Activated naive CD4-positive, alpha-beta T cell treated with anti-CD3 and anti-CD28 coated beads for 36 hours (primary cell): ENCODE measurements at regions of chr10 and their contacts with region 1.

Region 1: GRCh38 chr10:14185316-14186045 is 145.2 kb downstream of the FRMD4A start:
- DNase-seq: peak; percentile 73
- H3K4me3 Mint-ChIP-seq: peak overlapping the region; percentile 61
- H3K27ac Mint-ChIP-seq: peak overlapping the region; percentile 96
- H3K4me1 Mint-ChIP-seq: peaks cover 29% of the 10 kb centered on the region
- H3K27me3 Mint-ChIP-seq: peaks cover 27% of the 10 kb centered on the region

Region 2: GRCh38 chr10:13348216-13349017 is 837.1 kb before region 1 on chr10 and contains the start of gene SEPHS1:
- CTCF ChIA-PET with region 1: no interaction called
- intact Hi-C with region 1: no loop called
- DNase-seq: peak; percentile 91
- H3K4me3 Mint-ChIP-seq: peak within 1 kb of the TSS; percentile 88
- H3K27ac Mint-ChIP-seq: peak within 1 kb of the TSS; percentile 94
- H3K4me1 Mint-ChIP-seq: peaks cover 57% of the 10 kb centered on the region
- H3K27me3 Mint-ChIP-seq: no peaks in the 10 kb centered on the region
- total RNA-seq, gene SEPHS1: 75.6 to 79.6 TPM

Region 3: DNA sequence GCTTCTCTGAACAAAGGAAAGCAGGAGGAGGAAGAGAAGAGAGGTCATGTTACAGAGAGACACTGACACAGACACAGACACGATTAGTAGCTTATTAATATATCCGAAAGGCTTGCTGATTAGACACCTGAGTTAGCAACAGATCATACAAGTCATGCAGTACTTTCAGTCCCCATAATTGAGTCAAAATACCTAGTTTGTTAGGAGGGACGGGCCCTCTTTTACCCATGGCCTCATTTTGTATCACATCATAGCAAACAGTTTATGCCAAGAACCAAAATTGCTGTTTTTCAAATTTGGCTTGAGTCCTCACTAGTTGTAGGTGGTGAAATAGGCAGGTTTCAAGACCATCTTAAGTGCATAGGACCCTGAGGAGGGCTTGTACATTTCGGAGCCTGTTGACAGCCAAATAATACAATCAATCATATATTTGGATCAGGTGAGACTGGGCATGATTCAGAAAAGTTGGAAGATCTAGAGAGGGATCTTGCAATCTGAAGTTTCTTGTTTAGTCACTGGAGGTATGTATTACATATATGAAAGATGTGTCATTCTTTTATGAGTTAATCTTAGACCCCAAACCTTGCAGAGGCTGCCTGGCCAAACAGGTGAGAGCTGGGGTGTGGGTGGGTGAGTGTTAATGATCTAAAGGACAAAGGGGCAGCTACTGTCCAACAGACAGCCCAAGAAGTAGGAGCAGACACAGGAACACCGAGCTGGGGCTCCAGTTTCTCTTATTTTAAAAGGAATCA is 533.3 kb before region 1 on chr10:
- CTCF ChIA-PET with region 1: no interaction called
- intact Hi-C with region 1: loop called (anchors 2 kb)
- DNase-seq: peak; percentile 33
- H3K4me3 Mint-ChIP-seq: no peak overlapping the region
- H3K27ac Mint-ChIP-seq: peak overlapping the region; percentile 19
- H3K4me1 Mint-ChIP-seq: peaks cover 19% of the 10 kb centered on the region
- H3K27me3 Mint-ChIP-seq: no peaks in the 10 kb centered on the region

Region 4: GRCh38 chr10:14039968-14040671 is 145.4 kb before region 1 on chr10:
- CTCF ChIA-PET with region 1: interaction called, 3 read pairs
- intact Hi-C with region 1: loop called (anchors 1 kb)
- DNase-seq: no peak
- H3K4me3 Mint-ChIP-seq: no peak overlapping the region
- H3K27ac Mint-ChIP-seq: no peak overlapping the region
- H3K4me1 Mint-ChIP-seq: peaks cover 9% of the 10 kb centered on the region
- H3K27me3 Mint-ChIP-seq: no peaks in the 10 kb centered on the region

Region 5: DNA sequence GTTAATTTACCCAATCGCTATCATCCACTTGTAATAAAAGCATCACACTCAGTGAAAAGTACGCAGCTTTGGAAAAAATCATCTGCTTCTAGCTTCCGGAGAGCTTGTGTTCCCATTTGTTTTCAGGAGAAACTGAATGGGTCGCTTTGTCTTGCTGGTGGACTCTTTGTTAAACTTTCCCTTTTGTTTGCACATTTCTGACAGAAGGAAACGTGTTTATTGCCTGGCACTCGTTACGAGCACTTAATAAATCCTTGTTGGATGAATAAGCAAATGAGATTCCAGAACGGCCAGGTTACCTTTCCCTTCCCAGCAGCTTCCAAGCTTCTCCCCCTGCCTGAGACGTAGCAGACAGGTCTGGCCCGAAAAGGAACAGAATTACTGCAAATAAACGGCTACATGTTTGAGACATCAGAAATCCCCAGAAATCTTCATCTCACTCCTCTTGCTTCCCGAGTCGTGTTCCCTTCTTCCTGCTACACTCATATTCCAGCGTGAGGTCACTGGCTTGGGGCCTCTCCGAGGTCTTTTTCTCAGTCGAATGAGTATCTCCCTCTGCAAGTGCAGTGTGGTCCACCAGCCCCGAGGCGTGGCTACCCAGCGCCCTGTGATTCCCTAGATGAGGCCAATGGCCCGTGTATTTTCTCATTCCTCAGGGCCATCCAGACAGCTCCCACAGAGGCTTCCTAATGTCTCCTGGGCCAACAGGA is 21.9 kb before region 1 on chr10:
- CTCF ChIA-PET with region 1: no interaction called
- intact Hi-C with region 1: no loop called
- DNase-seq: no peak
- H3K4me3 Mint-ChIP-seq: no peak overlapping the region
- H3K27ac Mint-ChIP-seq: no peak overlapping the region
- H3K4me1 Mint-ChIP-seq: no peaks in the 10 kb centered on the region
- H3K27me3 Mint-ChIP-seq: peaks cover 27% of the 10 kb centered on the region

Region 6: DNA sequence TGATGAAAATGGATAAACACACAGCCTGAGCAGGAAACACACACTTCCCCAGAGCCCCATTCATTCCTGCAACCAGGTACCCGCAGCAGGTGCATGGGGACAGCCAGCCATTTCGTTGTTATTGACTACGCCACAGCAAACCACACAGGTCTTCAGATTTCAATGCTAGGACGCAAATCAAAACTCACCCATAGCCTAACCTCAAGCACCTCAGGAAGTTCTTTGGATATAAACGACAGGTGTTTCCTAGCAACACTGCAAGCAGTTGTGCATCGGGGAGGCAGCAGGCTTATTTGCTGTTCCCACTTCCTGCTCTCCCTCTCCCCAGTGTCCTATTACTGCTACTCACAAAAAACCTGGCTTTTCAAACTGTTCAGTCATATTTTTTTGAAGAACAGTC is 321.7 kb after region 1 on chr10:
- CTCF ChIA-PET with region 1: no interaction called
- intact Hi-C with region 1: loop called (anchors 1 kb)
- DNase-seq: peak; percentile 76
- H3K4me3 Mint-ChIP-seq: no peak overlapping the region
- H3K27ac Mint-ChIP-seq: peak overlapping the region; percentile 59
- H3K4me1 Mint-ChIP-seq: peaks cover 42% of the 10 kb centered on the region
- H3K27me3 Mint-ChIP-seq: no peaks in the 10 kb centered on the region

Region 7: GRCh38 chr10:14648005-14648765 is 462.7 kb after region 1 on chr10:
- CTCF ChIA-PET with region 1: no interaction called
- intact Hi-C with region 1: loop called (anchors 5 kb)
- DNase-seq: peak; percentile 83
- H3K4me3 Mint-ChIP-seq: peak overlapping the region; percentile 75
- H3K27ac Mint-ChIP-seq: peak overlapping the region; percentile 98
- H3K4me1 Mint-ChIP-seq: peaks cover 69% of the 10 kb centered on the region
- H3K27me3 Mint-ChIP-seq: no peaks in the 10 kb centered on the region

Region 8: DNA sequence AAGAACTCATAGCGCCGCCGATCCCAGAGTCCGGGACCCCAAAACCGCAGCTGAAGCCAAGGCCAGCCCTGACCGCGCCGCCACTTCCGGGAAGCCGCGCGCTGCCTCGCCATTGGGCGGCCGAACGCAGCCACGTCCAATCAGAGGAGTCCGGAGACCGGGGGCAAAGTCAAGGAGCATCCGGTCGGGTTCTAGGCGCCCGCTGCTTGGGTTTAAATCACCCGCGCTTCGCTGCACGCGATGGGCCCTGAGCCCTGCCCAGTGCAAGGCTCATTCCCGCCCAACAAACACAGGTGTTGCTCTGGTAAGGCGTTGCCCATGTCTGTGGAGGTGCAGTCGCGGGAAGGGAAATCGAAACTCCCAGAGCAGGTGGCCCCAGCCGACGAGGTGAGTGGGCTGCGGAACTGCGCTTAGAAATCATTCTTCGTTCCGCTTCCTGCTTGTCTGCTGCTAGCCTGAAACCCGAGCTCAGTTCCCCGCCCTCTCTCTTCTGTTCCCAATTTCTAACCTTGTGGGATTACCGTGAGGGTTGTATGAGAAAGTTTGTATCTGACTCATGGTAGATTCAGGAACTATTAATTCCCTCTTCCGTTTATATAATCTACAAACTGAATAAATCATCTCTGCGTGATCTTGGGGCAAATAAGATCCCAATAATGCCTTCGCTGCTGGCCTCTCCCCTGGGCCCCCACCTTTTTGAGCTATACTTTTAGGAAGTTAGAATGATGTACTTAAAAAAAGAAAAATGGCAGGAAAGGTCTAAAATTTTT is 768.7 kb after region 1 on chr10 and contains the start of gene DCLRE1C:
- CTCF ChIA-PET with region 1: no interaction called
- intact Hi-C with region 1: loop called (anchors 5 kb)
- DNase-seq: peak; percentile 91
- H3K4me3 Mint-ChIP-seq: peak within 1 kb of the TSS; percentile 90
- H3K27ac Mint-ChIP-seq: peak within 1 kb of the TSS; percentile 93
- H3K4me1 Mint-ChIP-seq: peaks cover 54% of the 10 kb centered on the region
- H3K27me3 Mint-ChIP-seq: no peaks in the 10 kb centered on the region
- total RNA-seq, gene DCLRE1C: 9.8 to 13.9 TPM

Region 9: GRCh38 chr10:15168781-15169554 is 983.5 kb after region 1 on chr10:
- CTCF ChIA-PET with region 1: no interaction called
- intact Hi-C with region 1: loop called (anchors 1 kb)
- DNase-seq: peak; percentile 99
- H3K4me3 Mint-ChIP-seq: peak overlapping the region; percentile 74
- H3K27ac Mint-ChIP-seq: peak overlapping the region; percentile 76
- H3K4me1 Mint-ChIP-seq: peaks cover 49% of the 10 kb centered on the region
- H3K27me3 Mint-ChIP-seq: no peaks in the 10 kb centered on the region